CD8-positive, alpha-beta T cell (primary cell): ENCODE measurements at regions of chr16 and their contacts with region 1.

Region 1: DNA sequence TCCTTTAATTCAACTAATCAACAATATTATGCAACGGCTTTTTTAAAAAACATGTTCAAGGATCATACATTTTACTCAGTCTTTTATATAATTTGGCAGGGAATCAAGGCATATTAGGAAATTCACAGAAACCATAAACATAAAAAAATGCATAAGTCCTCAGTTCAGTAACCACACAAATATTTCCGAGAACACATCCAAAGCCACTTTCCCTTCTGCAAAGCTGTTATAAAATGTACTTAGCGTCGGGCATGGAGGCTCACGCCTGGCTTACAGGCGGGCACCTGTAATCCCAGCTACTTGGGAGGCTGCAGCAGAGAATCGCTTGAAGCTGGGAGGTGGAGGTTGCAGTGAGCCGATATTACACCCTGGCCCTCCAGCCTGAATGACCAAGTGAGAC is 9.7 kb upstream of the ZC3H7A start:
- DNase-seq: no peak
- ATAC-seq: no peak
- H3K4me3 ChIP-seq: no peak overlapping the region
- H3K4me3 Mint-ChIP-seq: no peak overlapping the region
- H3K27ac ChIP-seq: no peak overlapping the region
- H3K27ac Mint-ChIP-seq: no peak overlapping the region
- H3K4me1 ChIP-seq: no peaks in the 10 kb centered on the region
- H3K4me1 Mint-ChIP-seq: peaks cover 7% of the 10 kb centered on the region
- H3K27me3 ChIP-seq: no peaks in the 10 kb centered on the region
- H3K27me3 Mint-ChIP-seq: no peaks in the 10 kb centered on the region
- CTCF ChIP-seq: no peak

Region 2: GRCh38 chr16:10390330-10390729 is 1416.4 kb before region 1 on chr16:
- CTCF ChIA-PET with region 1: no interaction called
- POLR2A ChIA-PET with region 1: no interaction called
- intact Hi-C with region 1: no loop called
- DNase-seq: no peak
- ATAC-seq: no peak
- H3K4me3 ChIP-seq: peak overlapping the region in 1 of 2 experiments; percentile 6
- H3K4me3 Mint-ChIP-seq: peak overlapping the region; percentile 37
- H3K27ac ChIP-seq: no peak overlapping the region
- H3K27ac Mint-ChIP-seq: peak overlapping the region; percentile 75
- H3K4me1 ChIP-seq: peaks cover 27% of the 10 kb centered on the region
- H3K4me1 Mint-ChIP-seq: peaks cover 62% of the 10 kb centered on the region
- H3K27me3 ChIP-seq: no peaks in the 10 kb centered on the region
- H3K27me3 Mint-ChIP-seq: no peaks in the 10 kb centered on the region
- CTCF ChIP-seq: no peak

Region 3: DNA sequence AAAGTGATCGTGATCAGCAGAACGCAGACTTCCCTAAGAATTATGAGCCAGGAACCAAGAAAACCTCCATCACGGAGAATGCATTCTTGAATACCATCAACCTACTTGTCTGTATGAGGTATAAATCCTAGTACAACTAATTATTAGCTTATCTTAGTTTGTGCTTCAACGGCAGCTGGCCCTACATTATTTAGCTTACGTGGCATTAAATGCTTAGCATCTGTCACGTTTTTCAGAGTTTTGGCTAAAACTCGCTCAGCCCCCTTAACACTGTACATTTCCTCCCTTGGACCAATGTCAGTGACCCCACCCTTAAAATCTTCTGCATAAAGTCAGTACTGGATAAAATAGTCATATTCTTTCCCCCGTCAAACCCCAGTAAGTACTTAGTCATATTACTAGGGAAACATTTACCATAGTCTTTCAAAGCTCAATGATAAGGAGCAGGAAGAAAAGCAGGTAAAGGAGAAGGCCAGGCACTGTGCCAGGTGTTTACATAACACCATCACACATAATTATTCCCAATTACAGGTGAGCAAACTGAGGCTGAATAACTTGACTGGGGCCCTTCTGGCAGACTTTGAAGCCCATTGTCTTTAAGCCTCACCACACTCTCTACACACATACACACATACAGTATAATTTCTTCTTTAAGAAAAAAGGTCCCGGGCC is 47.4 kb before region 1 on chr16:
- CTCF ChIA-PET with region 1: no interaction called
- POLR2A ChIA-PET with region 1: no interaction called
- intact Hi-C with region 1: no loop called
- DNase-seq: no peak
- ATAC-seq: no peak
- H3K4me3 ChIP-seq: no peak overlapping the region
- H3K4me3 Mint-ChIP-seq: no peak overlapping the region
- H3K27ac ChIP-seq: no peak overlapping the region
- H3K27ac Mint-ChIP-seq: no peak overlapping the region
- H3K4me1 ChIP-seq: no peaks in the 10 kb centered on the region
- H3K4me1 Mint-ChIP-seq: no peaks in the 10 kb centered on the region
- H3K27me3 ChIP-seq: no peaks in the 10 kb centered on the region
- H3K27me3 Mint-ChIP-seq: no peaks in the 10 kb centered on the region
- CTCF ChIP-seq: no peak

Region 4: DNA sequence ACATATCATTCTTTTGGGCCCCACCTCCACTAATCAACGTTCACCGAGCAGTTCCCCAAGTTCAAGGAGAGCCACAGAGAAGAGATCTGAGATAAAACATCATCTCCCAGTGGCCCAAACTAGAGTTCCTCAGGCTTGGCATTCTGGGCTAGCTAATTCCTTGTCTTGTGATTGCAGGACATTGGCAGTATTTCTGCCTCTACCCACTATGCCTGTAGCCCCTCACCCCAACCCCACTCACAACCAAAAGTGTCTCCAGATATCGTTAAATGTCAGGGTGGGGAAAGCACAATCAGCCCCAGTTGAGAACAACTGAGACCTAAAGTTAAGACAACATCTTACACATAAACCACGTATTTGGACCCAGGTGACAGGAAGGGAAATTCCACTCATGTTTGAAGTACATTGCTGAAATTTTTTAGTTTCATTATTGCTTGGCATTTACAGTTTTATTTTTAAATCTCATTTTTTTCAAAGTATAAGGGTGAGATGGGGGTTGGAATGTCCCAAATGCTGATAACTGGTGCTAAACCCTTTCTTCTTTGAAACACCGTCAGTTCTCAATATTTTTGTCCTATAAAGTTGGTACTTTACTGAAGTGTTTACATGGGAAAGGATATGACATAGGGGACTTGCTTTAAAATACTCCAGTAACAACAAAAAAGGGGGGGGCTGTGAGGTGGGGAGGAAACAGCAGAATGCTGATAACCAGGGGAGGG is 23.2 kb before region 1 on chr16:
- CTCF ChIA-PET with region 1: no interaction called
- POLR2A ChIA-PET with region 1: no interaction called
- intact Hi-C with region 1: loop called in 1 of 2 experiments (anchors 5 kb)
- DNase-seq: peak in 6 of 9 experiments; percentile 17 to 93 (median 54)
- ATAC-seq: peak; percentile 81
- H3K4me3 ChIP-seq: peak overlapping the region; percentile 32 to 36
- H3K4me3 Mint-ChIP-seq: peak overlapping the region; percentile 78
- H3K27ac ChIP-seq: peak overlapping the region; percentile 82 to 96
- H3K27ac Mint-ChIP-seq: peak overlapping the region; percentile 99
- H3K4me1 ChIP-seq: peaks cover 51% of the 10 kb centered on the region
- H3K4me1 Mint-ChIP-seq: peaks cover 57% of the 10 kb centered on the region
- H3K27me3 ChIP-seq: no peaks in the 10 kb centered on the region
- H3K27me3 Mint-ChIP-seq: no peaks in the 10 kb centered on the region
- CTCF ChIP-seq: no peak

Region 5: GRCh38 chr16:11833951-11834695 is 27.4 kb after region 1 on chr16:
- CTCF ChIA-PET with region 1: no interaction called
- POLR2A ChIA-PET with region 1: no interaction called
- intact Hi-C with region 1: no loop called
- DNase-seq: no peak
- ATAC-seq: no peak
- H3K4me3 ChIP-seq: no peak overlapping the region
- H3K4me3 Mint-ChIP-seq: no peak overlapping the region
- H3K27ac ChIP-seq: no peak overlapping the region
- H3K27ac Mint-ChIP-seq: no peak overlapping the region
- H3K4me1 ChIP-seq: no peaks in the 10 kb centered on the region
- H3K4me1 Mint-ChIP-seq: no peaks in the 10 kb centered on the region
- H3K27me3 ChIP-seq: no peaks in the 10 kb centered on the region
- H3K27me3 Mint-ChIP-seq: no peaks in the 10 kb centered on the region
- CTCF ChIP-seq: no peak

Region 6: GRCh38 chr16:12340151-12340733 is 533.5 kb after region 1 on chr16:
- CTCF ChIA-PET with region 1: no interaction called
- POLR2A ChIA-PET with region 1: no interaction called
- intact Hi-C with region 1: no loop called
- DNase-seq: peak in 3 of 9 experiments; percentile 8 to 27 (median 22)
- ATAC-seq: no peak
- H3K4me3 ChIP-seq: no peak overlapping the region
- H3K4me3 Mint-ChIP-seq: no peak overlapping the region
- H3K27ac ChIP-seq: no peak overlapping the region
- H3K27ac Mint-ChIP-seq: no peak overlapping the region
- H3K4me1 ChIP-seq: no peaks in the 10 kb centered on the region
- H3K4me1 Mint-ChIP-seq: no peaks in the 10 kb centered on the region
- H3K27me3 ChIP-seq: no peaks in the 10 kb centered on the region
- H3K27me3 Mint-ChIP-seq: no peaks in the 10 kb centered on the region
- CTCF ChIP-seq: peak; percentile 25